ENCODE measurements at regions of chr20 and their contacts with region 1.

Region 1: DNA sequence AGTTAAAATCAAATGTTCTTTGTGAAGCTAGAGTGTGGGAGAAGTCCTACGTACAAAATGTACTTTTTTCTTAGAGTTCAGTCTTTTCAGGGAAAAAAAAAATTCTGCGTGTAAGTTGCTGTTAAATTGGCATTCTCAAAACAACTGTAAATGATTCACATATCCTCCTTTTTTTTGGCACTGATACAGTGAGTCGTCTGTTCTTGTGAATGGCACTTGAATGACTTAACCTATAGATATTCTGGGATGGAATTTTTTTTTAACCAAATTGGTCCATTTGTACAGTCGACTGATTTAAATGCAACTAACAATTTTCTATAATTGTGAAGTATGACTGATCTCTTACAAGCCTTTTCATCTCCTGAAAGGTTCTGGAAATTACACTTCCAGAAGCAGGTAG is 5.5 kb upstream of the JAG1 start:
- DNase-seq: no peak
- H3K4me3 Mint-ChIP-seq: peak overlapping the region; percentile 4
- H3K27ac Mint-ChIP-seq: peak overlapping the region; percentile 72
- H3K4me1 Mint-ChIP-seq: peaks cover 19% of the 10 kb centered on the region
- H3K27me3 Mint-ChIP-seq: no peaks in the 10 kb centered on the region
- CTCF ChIP-seq: no peak

Region 2: GRCh38 chr20:10591956-10592521 is 87.2 kb before region 1 on chr20:
- CTCF ChIA-PET with region 1: no interaction called
- intact Hi-C with region 1: no loop called
- DNase-seq: no peak
- H3K4me3 Mint-ChIP-seq: no peak overlapping the region
- H3K27ac Mint-ChIP-seq: peak overlapping the region; percentile 50
- H3K4me1 Mint-ChIP-seq: peaks cover 17% of the 10 kb centered on the region
- H3K27me3 Mint-ChIP-seq: no peaks in the 10 kb centered on the region
- CTCF ChIP-seq: no peak

Region 3: DNA sequence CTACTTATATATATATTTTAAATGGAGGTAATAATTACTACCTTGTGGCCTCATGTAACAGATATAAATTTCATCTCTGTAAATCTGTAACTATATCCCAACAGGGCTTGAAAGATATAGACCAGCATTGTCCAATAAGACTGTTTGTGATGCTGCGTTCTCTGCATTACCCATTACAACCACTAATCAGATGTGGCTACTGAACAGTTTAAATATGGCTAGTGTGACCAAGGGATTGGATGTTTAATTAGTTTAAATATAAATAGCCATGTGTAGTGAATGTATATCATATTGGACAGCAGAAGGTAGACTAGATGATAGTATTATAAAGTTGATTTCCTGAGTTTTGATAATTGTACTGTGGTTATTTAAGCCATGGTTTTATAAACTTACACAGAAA is 22.3 kb after region 1 on chr20:
- CTCF ChIA-PET with region 1: interaction called, 7 read pairs
- intact Hi-C with region 1: loop called (anchors 2 kb)
- DNase-seq: no peak
- H3K4me3 Mint-ChIP-seq: no peak overlapping the region
- H3K27ac Mint-ChIP-seq: no peak overlapping the region
- H3K4me1 Mint-ChIP-seq: peaks cover 41% of the 10 kb centered on the region
- H3K27me3 Mint-ChIP-seq: no peaks in the 10 kb centered on the region
- CTCF ChIP-seq: no peak